ENCODE measurements at regions of chr12 and their contacts with region 1.

Region 1: GRCh38 chr12:88141770-88142609 is at the starts of genes CEP290 and TMTC3:
- DNase-seq: peak; percentile 94 to 99 (median 96)

Region 2: GRCh38 chr12:87930033-87930432 is 212.0 kb before region 1 on chr12:
- intact Hi-C with region 1: no loop called
- DNase-seq: peak in 5 of 10 donors; percentile 16 to 87 (median 22)

Region 3: DNA sequence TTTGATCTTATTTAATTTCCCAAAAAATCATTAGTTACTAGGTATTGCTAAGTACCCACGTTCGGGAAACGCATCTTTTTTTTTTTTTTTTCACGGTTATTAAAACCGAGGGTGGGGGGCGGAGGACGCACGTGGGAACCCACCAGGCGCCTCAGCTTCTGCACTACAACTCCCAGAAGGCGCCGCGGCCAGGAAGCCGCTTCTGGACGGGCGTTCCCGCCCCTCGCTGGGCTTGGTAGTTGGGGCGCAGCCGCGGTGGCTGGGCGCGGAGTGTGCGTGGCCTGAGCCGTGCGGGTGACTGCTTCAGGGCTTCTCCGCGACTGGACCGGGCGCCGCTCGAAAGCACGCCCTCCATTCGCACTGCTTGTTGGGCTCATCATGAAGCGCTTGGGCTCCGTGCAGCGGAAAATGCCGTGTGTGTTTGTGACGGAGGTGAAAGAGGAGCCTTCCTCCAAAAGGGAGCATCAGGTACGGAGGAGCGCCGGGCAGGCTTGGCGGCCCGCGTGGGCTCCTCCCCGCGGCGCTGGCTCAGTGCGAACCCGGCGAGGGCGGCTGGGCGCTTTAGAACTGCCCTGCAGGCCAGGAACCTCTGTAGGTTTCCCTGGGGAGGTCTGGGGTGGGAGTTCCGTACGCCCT is 106.6 kb before region 1 on chr12:
- intact Hi-C with region 1: loop called (anchors 5 kb)
- DNase-seq: peak; percentile 88 to 99 (median 94)

Region 4: GRCh38 chr12:88579161-88579517 is 437.1 kb after region 1 on chr12:
- intact Hi-C with region 1: loop called (anchors 10 kb)
- DNase-seq: peak in 1 of 10 donors; percentile 59

Region 5: GRCh38 chr12:88993651-88994050 is 851.7 kb after region 1 on chr12:
- intact Hi-C with region 1: loop called (anchors 10 kb)
- DNase-seq: no peak

Region 6: DNA sequence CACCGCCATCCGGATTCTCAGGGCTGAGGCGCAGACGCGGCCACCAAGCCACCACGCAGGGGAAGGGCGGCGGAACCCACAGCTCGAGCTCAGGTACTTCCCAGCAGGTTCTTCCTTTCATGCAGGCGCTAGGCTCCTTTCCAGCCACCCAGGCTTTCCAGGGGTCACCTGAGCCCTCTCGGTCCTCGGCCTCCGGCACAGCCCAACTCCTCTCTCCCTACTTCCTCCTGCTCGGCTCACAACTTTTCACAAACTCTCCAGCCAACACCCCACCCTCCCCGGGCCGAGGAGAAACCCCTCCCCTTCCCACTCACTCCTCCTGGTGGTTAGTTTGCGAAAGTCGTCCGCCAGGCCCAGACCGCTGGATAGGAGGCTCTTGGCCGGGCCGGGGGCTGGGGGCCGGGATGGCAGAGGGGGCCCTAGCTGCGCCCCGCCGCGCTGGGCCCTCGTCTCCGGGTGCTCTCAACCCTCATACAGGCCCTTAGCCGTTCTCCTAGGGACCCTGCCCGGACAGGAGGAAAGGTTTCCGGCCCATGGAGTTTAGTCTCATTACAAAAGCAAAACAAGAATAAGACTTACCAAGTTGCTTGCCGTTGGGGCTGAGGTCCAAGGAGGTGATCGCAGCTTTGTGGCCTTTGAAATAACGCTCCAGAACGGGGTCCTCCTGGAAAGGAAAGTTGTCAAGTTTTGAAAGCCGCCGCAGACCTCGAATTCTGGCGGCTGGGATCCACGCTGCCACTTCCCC is 1382.7 kb after region 1 on chr12 and contains the start of gene GALNT4:
- intact Hi-C with region 1: loop called (anchors 5 kb)
- DNase-seq: peak; percentile 58 to 96 (median 76)

Measured in posterior cingulate gyrus (tissue), 11 donors.